CD8-positive, alpha-beta T cell (primary cell): ENCODE measurements at regions of chr3 and their contacts with region 1.

Region 1: GRCh38 chr3:140748903-140749302 is 71.0 kb downstream of the TRIM42 start:
- DNase-seq: no peak
- ATAC-seq: no peak
- H3K4me3 ChIP-seq: no peak overlapping the region
- H3K4me3 Mint-ChIP-seq: no peak overlapping the region
- H3K27ac ChIP-seq: no peak overlapping the region
- H3K27ac Mint-ChIP-seq: no peak overlapping the region
- H3K4me1 ChIP-seq: no peaks in the 10 kb centered on the region
- H3K4me1 Mint-ChIP-seq: peaks cover 7% of the 10 kb centered on the region
- H3K27me3 ChIP-seq: no peaks in the 10 kb centered on the region
- H3K27me3 Mint-ChIP-seq: peaks cover 4% of the 10 kb centered on the region
- CTCF ChIP-seq: no peak

Region 2: GRCh38 chr3:140770988-140771667 is 22.2 kb after region 1 on chr3:
- CTCF ChIA-PET with region 1: no interaction called
- POLR2A ChIA-PET with region 1: no interaction called
- intact Hi-C with region 1: loop called in 1 of 2 experiments (anchors 1 kb)
- DNase-seq: no peak
- ATAC-seq: no peak
- H3K4me3 ChIP-seq: no peak overlapping the region
- H3K4me3 Mint-ChIP-seq: no peak overlapping the region
- H3K27ac ChIP-seq: no peak overlapping the region
- H3K27ac Mint-ChIP-seq: no peak overlapping the region
- H3K4me1 ChIP-seq: peaks cover 5% of the 10 kb centered on the region
- H3K4me1 Mint-ChIP-seq: peaks cover 14% of the 10 kb centered on the region
- H3K27me3 ChIP-seq: no peaks in the 10 kb centered on the region
- H3K27me3 Mint-ChIP-seq: no peaks in the 10 kb centered on the region
- CTCF ChIP-seq: no peak